Activated CD4-positive, alpha-beta memory T cell treated with anti-CD3 and anti-CD28 coated beads, Interleukin-2, amount 10 ng/mL, durations not matched to agents 7 days and 5 days (primary cell): ENCODE measurements at regions of chr16 and their contacts with region 1.

Region 1: DNA sequence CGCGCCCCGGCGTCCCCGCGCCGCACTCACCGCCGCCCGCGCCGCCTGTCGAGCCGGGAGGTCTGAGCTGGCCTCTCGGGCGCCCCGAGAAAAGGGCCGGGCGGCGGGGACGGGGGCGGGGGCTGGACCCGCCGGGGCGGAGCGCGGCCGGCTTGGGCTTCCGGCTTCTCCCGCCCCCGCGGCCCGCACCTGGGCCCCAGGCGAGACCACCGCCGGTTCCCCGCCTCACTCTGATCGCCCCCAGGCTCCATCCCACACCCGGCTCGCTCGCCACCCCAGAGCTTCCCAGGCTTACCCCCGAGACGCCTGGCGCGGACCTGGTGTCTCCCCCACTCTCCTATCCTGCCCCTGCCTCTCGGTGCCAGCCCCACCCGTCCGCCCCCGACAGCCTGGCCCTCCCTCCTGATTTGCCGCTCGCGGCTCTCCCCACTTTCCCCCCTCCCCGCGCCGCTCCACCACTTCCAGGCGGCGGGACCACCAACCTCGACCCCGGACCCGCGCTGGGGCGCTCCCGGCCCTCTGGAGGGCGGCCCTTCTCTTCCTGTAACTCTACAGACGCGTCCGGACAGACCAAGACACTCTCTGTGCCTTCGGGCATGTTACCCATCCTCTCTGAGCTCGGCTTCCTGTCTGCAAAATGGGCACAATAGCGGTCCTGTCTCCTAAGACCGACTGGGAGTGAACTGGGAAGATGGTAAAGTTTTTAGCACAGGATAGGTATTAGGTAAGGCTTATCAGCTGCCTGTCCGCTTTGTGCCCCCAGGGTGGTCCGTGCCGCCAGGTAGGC is at the start of gene LITAF:
- DNase-seq: peak; percentile 66
- H3K4me3 Mint-ChIP-seq: peak within 1 kb of the TSS; percentile 96
- H3K27ac Mint-ChIP-seq: peak within 1 kb of the TSS; percentile 89
- H3K4me1 Mint-ChIP-seq: peaks cover 38% of the 10 kb centered on the region
- H3K27me3 Mint-ChIP-seq: peaks cover 3% of the 10 kb centered on the region
- total RNA-seq, gene LITAF: 149 to 157 TPM

Region 2: GRCh38 chr16:11560701-11561449 is 26.2 kb before region 1 on chr16:
- CTCF ChIA-PET with region 1: interaction called, 7 read pairs
- POLR2A ChIA-PET with region 1: interaction called, 29 read pairs
- DNase-seq: peak; percentile 78
- H3K4me3 Mint-ChIP-seq: peak overlapping the region; percentile 70
- H3K27ac Mint-ChIP-seq: peak overlapping the region; percentile 90
- H3K4me1 Mint-ChIP-seq: peaks cover 89% of the 10 kb centered on the region
- H3K27me3 Mint-ChIP-seq: no peaks in the 10 kb centered on the region

Region 3: DNA sequence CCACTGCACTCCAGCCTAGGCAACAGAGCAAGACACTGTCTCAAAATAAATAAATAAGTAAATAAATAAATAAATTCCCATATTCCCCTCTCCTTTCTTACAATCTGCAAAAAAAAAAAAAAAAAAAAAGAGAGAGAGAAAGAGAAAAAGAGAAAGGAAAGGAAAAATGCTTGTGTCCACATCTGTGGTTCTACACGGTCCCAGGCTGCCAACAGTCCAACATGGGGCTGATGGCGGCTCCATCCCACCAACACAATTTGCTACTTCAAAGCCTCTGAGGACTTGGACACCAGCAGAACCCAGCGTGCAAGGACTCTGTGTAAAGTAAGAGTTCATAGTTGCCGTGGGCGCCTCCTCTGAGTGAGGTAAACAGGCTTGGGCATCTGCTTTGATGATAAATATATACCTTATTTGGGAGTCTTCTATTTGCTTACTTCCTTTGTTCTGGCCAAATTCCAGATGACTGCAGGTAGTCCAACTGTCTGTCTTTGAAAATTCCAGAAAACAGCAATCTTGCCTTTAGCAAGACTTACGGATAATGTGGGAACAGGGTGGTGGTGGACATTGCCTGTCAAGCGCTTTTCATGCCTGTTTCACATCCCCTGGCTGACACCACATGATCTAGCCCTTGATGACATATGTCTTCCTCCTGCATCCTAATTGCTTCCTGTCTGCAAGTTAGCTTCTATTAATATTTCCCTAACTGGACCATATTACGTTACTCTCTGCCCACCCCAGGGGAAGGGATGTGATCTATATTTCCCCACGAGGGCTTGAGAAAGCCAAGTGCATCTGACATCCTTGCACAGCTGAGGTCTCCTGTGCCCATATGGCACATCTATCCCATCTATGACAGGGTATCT is 10.4 kb before region 1 on chr16:
- CTCF ChIA-PET with region 1: no interaction called
- POLR2A ChIA-PET with region 1: interaction called, 10 read pairs
- DNase-seq: no peak
- H3K4me3 Mint-ChIP-seq: peak overlapping the region; percentile 38
- H3K27ac Mint-ChIP-seq: peak overlapping the region; percentile 24
- H3K4me1 Mint-ChIP-seq: peaks cover 79% of the 10 kb centered on the region
- H3K27me3 Mint-ChIP-seq: no peaks in the 10 kb centered on the region

Region 4: GRCh38 chr16:11613381-11614303 is 26.6 kb after region 1 on chr16:
- CTCF ChIA-PET with region 1: interaction called, 4 read pairs
- POLR2A ChIA-PET with region 1: interaction called, 60 read pairs
- DNase-seq: peak; percentile 39
- H3K4me3 Mint-ChIP-seq: no peak overlapping the region
- H3K27ac Mint-ChIP-seq: peak overlapping the region; percentile 61
- H3K4me1 Mint-ChIP-seq: peaks cover 25% of the 10 kb centered on the region
- H3K27me3 Mint-ChIP-seq: peaks cover 17% of the 10 kb centered on the region

Region 5: DNA sequence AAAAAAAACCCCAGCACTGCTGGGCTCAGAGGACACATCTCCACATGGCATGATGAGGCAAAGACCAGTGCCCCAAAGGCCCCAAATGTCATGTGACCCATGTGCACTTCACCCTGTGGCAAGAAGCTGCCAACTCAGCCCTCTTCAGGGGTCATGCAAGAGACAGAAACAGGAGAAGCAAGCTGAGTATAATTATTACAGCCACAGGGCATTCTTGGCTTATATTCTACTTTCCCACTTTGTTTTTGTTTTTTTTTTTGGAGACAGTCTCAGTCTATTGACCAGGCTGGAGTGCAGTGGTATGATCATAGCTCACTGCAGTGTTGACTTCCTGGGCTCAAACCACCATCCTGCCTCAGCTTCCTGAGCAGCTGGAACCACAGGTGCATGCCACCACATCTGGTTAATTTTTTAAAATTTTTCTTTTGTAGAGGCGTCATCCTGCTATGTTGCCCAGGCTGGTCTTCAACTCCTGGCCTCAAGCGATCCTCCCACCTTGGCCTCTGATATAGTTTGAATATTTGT is 32.3 kb after region 1 on chr16:
- CTCF ChIA-PET with region 1: interaction called, 4 read pairs
- POLR2A ChIA-PET with region 1: interaction called, 60 read pairs
- DNase-seq: peak; percentile 78
- H3K4me3 Mint-ChIP-seq: peak overlapping the region; percentile 37
- H3K27ac Mint-ChIP-seq: peak overlapping the region; percentile 97
- H3K4me1 Mint-ChIP-seq: peaks cover 65% of the 10 kb centered on the region
- H3K27me3 Mint-ChIP-seq: peaks cover 3% of the 10 kb centered on the region